CD14-positive monocyte (primary cell): ENCODE measurements at regions of chr15 and their contacts with region 1.

Region 1: GRCh38 chr15:55420171-55420866 is 12.0 kb downstream of the PIERCE2 start:
- DNase-seq: peak in 2 of 3 donors; percentile 43 to 49
- H3K4me3 ChIP-seq: no peak overlapping the region
- H3K4me3 Mint-ChIP-seq: no peak overlapping the region
- H3K27ac ChIP-seq: no peak overlapping the region
- H3K27ac Mint-ChIP-seq: peak overlapping the region in 4 of 7 donors; percentile 23 to 61 (median 48)
- H3K4me1 ChIP-seq: peaks cover 12 to 18% of the 10 kb centered on the region in 2 donors
- H3K4me1 Mint-ChIP-seq: peaks cover 19% of the 10 kb centered on the region
- H3K27me3 ChIP-seq: no peaks in the 10 kb centered on the region
- H3K27me3 Mint-ChIP-seq: no peaks in the 10 kb centered on the region
- CTCF ChIP-seq: no peak

Region 2: DNA sequence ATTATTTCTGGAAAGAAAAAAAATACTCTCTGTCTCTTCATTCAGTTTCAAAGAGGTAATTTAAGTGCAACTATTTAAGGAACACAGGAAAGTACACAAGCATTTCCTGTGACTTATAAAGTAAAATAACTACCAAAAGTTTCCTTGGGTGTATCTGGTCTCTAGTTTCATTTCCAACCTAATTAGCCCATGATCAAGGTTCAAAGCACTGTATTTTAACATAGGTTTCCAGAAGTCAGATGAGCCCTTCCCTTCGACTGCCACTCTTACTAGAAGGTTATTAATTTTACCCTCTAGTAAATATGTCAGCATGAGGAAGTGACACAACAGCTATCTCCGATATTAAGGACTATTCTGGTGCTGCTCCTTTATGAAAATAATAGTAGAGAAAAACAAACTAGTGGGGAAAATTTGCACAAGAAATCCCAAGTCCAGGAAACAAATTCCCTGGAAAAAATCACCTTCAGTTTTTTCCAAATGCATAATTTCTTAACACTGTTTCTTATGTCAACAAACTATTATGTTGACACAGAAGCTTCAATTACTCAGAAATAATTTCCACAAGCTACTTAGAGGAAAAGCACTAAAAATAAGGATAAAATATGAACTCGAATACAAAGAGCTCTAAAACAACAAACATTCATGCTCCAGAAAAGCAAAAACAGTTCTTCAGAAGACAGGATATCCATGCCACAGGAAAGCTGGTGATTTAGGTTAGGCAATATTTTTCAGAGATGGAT is 47.4 kb before region 1 on chr15:
- intact Hi-C with region 1: loop called in 1 of 2 experiments (anchors 10 kb)
- DNase-seq: no peak
- H3K4me3 ChIP-seq: no peak overlapping the region
- H3K4me3 Mint-ChIP-seq: no peak overlapping the region
- H3K27ac ChIP-seq: peak overlapping the region in 1 of 2 donors; percentile 30
- H3K27ac Mint-ChIP-seq: peak overlapping the region in 2 of 7 donors; percentile 5 to 49
- H3K4me1 ChIP-seq: peaks cover 8 to 14% of the 10 kb centered on the region in 2 donors
- H3K4me1 Mint-ChIP-seq: peaks cover 21% of the 10 kb centered on the region
- H3K27me3 ChIP-seq: no peaks in the 10 kb centered on the region
- H3K27me3 Mint-ChIP-seq: no peaks in the 10 kb centered on the region
- CTCF ChIP-seq: no peak

Region 3: GRCh38 chr15:55394694-55395093 is 25.6 kb before region 1 on chr15:
- intact Hi-C with region 1: no loop called
- DNase-seq: peak; percentile 44 to 76 (median 53)
- H3K4me3 ChIP-seq: peak overlapping the region in 1 of 3 experiments; percentile 31
- H3K4me3 Mint-ChIP-seq: peak overlapping the region; percentile 21 to 68
- H3K27ac ChIP-seq: peak overlapping the region; percentile 52 to 83
- H3K27ac Mint-ChIP-seq: peak overlapping the region; percentile 72 to 92 (median 89)
- H3K4me1 ChIP-seq: peaks cover 37 to 40% of the 10 kb centered on the region in 2 donors
- H3K4me1 Mint-ChIP-seq: peaks cover 60% of the 10 kb centered on the region
- H3K27me3 ChIP-seq: no peaks in the 10 kb centered on the region
- H3K27me3 Mint-ChIP-seq: peaks cover 0 to 1% (median 0%) of the 10 kb centered on the region in 3 donors
- CTCF ChIP-seq: no peak